Activated CD8-positive, alpha-beta T cell treated with anti-CD3 and anti-CD28 coated beads, Interleukin-2, amount 10 ng/mL, durations not matched to agents 7 days and 5 days (primary cell): ENCODE measurements at regions of chr12 and their contacts with region 1.

Region 1: DNA sequence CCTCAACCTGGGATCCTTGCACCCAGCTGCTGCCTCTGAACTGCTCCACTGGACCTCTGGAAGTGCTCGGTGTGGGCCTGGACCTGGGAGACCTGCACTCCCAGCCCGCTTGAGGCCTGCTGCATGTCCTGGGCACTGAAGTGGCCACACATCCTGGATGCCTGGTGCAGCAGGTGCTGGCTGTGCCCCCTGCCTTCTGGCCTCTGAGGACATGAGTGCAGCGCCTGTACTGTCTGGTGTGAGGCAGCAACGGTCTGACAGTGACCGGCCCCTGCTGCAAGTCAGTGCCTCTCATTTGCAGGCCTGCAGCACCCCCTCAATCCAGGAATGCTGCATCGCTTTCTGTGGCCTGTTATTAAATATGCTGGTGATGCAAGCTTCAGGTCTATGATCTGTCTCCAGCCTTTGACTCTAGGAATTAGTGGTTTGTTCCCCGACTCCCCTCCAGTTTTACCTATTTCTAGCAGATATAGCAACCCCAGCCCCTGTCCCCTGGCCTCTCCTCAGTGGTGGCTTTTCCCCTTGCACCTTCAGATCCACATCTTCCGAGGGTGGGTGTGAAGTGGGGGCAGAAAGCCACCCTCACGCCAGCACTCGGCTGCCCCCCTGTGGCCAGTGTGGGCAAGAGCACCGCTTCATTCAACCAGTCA is 3.6 kb downstream of the SMIM41 start:
- DNase-seq: peak; percentile 78
- ATAC-seq: peak; percentile 83
- H3K4me3 Mint-ChIP-seq: no peak overlapping the region
- H3K27ac Mint-ChIP-seq: no peak overlapping the region
- H3K4me1 Mint-ChIP-seq: peaks cover 18% of the 10 kb centered on the region
- H3K27me3 Mint-ChIP-seq: peaks cover 8% of the 10 kb centered on the region

Region 2: DNA sequence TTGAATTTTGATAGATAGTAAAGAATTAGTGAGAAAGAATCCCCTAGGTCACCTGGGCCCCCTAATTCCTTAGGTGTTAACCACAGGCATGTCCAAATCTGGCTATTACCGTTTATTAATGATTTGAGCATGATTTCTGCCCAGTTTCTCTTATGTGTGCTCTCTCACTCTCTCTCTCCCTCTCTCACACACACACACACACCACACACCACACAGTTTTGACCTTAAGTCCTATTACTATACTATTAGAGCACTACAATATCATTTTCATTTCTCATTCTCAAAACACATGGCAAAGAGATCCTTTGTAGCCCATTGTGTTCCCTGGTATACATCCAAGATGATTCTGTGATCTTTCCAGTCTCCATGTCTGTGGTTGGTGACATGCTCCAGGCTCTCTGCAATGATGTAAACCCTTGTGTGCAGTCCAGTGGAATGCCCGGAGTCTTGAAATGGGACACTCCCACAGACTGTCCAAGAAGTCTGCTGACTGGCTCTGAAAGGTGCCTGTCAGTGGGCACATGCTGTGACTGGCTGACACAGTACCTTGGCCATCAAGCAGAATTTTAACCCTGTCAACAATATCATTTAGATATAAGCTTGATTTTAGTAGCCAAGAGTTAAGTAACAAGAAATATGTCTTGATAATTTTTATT is 330.8 kb before region 1 on chr12:
- CTCF ChIA-PET with region 1: no interaction called
- POLR2A ChIA-PET with region 1: no interaction called
- DNase-seq: no peak
- ATAC-seq: no peak
- H3K4me3 Mint-ChIP-seq: no peak overlapping the region
- H3K27ac Mint-ChIP-seq: no peak overlapping the region
- H3K4me1 Mint-ChIP-seq: no peaks in the 10 kb centered on the region
- H3K27me3 Mint-ChIP-seq: peaks cover 18% of the 10 kb centered on the region

Region 3: DNA sequence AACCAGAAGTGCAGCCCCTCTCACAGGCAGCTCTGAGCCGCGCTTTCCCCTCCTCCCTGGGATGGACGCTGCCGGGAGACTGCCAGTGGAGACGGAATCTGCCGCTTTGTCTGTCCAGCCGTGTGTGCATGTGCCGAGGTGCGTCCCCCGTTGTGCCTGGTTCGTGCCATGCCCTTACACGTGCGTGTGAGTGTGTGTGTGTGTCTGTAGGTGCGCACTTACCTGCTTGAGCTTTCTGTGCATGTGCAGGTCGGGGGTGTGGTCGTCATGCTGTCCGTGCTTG is 88.6 kb before region 1 on chr12:
- CTCF ChIA-PET with region 1: interaction called, 12 read pairs
- POLR2A ChIA-PET with region 1: no interaction called
- DNase-seq: no peak
- ATAC-seq: no peak
- H3K4me3 Mint-ChIP-seq: no peak overlapping the region
- H3K27ac Mint-ChIP-seq: no peak overlapping the region
- H3K4me1 Mint-ChIP-seq: peaks cover 7% of the 10 kb centered on the region
- H3K27me3 Mint-ChIP-seq: no peaks in the 10 kb centered on the region

Region 4: GRCh38 chr12:52063981-52064649 is 19.0 kb before region 1 on chr12:
- CTCF ChIA-PET with region 1: interaction called, 17 read pairs
- POLR2A ChIA-PET with region 1: interaction called, 4 read pairs
- DNase-seq: no peak
- ATAC-seq: no peak
- H3K4me3 Mint-ChIP-seq: no peak overlapping the region
- H3K27ac Mint-ChIP-seq: no peak overlapping the region
- H3K4me1 Mint-ChIP-seq: peaks cover 13% of the 10 kb centered on the region
- H3K27me3 Mint-ChIP-seq: peaks cover 6% of the 10 kb centered on the region

Region 5: GRCh38 chr12:52662093-52662917 is 579.2 kb after region 1 on chr12:
- CTCF ChIA-PET with region 1: no interaction called
- POLR2A ChIA-PET with region 1: no interaction called
- DNase-seq: no peak
- ATAC-seq: no peak
- H3K4me3 Mint-ChIP-seq: no peak overlapping the region
- H3K27ac Mint-ChIP-seq: no peak overlapping the region
- H3K4me1 Mint-ChIP-seq: peaks cover 8% of the 10 kb centered on the region
- H3K27me3 Mint-ChIP-seq: peaks cover 7% of the 10 kb centered on the region